SK-N-SH (cell line): ENCODE measurements at regions of chr3 and their contacts with region 1.

Region 1: DNA sequence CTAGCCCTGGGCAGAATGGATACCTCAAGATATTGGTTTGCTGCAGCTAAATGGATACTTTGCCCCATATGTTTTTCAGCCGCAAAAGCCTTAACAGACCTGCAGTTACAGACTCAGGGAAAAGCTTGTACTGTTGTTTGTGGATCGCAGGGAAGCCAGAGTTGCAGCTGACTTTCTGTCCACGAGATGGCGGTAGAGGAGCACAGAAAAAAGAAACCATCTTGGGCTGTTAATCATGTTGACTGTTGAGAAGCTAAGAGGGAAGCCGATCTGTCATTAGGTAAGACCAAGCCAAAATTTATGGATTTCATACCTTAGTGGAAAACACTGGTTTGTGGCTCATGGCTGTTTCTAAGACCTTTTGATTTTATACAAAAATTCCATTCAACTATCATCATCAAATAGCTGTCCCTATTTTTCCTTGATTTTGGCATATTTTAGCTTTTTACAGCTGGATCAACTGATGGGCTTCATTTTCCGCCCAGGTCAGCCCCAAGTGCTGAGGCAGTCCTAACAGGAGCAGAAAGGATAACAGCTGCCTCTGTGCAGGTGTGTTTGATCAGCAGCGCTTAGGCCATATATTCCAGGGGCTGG is 205.7 kb upstream of the ZPLD1 start:
- DNase-seq: peak; percentile 41
- H3K4me3 ChIP-seq: no peak overlapping the region
- H3K27ac ChIP-seq: no peak overlapping the region
- H3K4me1 ChIP-seq: peaks cover 5 to 11% of the 10 kb centered on the region in 2 experiments; a peak in 3 of 4 replicates
- H3K27me3 ChIP-seq: no peaks in the 10 kb centered on the region
- CTCF ChIP-seq: peak; percentile 96
- EP300 ChIP-seq: 0 out of 4 replicates have a peak, but pooled peaks of 1 of the 2 experiments have one; percentile 10
- RAD21 ChIP-seq: peak; percentile 98

Region 2: GRCh38 chr3:101803173-101803782 is 425.9 kb before region 1 on chr3:
- CTCF ChIA-PET with region 1: interaction called, 165 read pairs
- POLR2A ChIA-PET with region 1: no interaction called
- DNase-seq: peak; percentile 56
- H3K4me3 ChIP-seq: no peak overlapping the region; a peak in 1 of 4 replicates
- H3K27ac ChIP-seq: no peak overlapping the region
- H3K4me1 ChIP-seq: no peaks in the 10 kb centered on the region
- H3K27me3 ChIP-seq: no peaks in the 10 kb centered on the region
- CTCF ChIP-seq: peak; percentile 95
- EP300 ChIP-seq: no peak
- RAD21 ChIP-seq: peak; percentile 63

Region 3: DNA sequence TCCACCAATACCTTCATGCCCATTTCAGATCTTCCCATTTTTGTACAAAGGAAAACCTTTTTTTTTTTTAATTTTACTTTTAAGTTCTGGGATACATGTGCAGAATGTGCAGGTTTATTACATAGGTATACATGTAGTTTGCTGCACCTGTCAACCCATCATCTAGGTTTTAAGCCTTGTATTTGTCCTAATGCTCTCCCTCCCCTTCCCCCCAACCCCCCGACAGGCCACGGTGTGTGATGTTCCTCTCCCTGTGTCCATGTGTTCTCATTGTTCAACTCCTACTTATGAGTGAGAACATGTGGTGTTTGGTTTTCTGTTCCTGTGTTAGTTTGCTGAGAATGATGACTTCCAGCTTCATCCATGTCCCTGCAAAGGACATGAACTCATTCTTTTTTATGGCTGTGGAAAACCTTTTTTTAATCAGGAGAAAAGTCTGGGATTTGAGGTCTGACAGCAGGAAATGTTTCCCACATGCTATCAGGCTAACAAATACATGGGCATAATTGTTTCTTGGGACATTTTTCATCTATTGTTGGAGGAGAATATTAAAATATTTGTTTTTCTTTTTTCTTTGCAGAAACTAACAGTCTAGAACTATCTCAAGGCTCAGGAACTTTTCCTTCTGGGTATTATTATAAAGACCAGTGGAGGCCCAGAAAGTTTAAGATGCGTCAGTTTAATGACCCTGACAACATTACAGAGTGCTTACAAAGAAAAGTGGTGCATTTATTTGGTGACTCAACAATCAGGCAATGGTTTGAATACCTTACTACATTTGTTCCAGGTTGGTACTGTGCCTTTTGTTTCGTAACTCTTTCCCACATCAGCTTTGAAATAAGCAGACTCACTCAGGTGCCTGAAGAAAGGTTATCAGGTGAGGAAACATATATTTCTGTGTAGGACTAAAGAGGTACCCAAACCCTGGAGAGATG is 412.7 kb before region 1 on chr3:
- CTCF ChIA-PET with region 1: interaction called, 165 read pairs
- POLR2A ChIA-PET with region 1: interaction called, 6 read pairs
- DNase-seq: no peak
- H3K4me3 ChIP-seq: no peak overlapping the region
- H3K27ac ChIP-seq: peak overlapping the region in 1 of 2 experiments; percentile 16; a peak in 2 of 4 replicates
- H3K4me1 ChIP-seq: peaks cover 0 to 3% of the 10 kb centered on the region in 2 experiments; a peak in 3 of 4 replicates
- H3K27me3 ChIP-seq: no peaks in the 10 kb centered on the region
- CTCF ChIP-seq: no peak
- EP300 ChIP-seq: no peak
- RAD21 ChIP-seq: no peak

Region 4: DNA sequence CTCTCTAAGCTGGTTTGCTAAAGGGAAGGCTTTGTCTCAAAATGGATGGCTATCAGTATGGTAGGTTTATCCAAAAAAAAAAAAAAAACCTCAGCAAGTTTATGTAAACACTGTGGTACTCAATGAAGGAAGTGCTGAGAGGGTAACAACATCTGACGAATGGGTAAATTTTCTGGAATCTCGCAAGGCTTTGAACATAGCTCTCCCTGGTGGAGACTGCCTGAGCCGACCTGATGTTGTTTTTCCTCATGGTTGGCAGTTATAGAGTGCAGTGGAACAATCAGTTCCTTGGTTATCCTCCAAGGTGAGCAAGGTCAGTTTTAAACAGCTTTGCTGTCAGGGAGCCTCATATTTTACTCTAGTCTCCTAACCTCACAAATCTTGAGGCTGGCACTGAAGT is 300.3 kb after region 1 on chr3:
- CTCF ChIA-PET with region 1: interaction called, 151 read pairs
- POLR2A ChIA-PET with region 1: interaction called, 3 read pairs
- DNase-seq: peak; percentile 5
- H3K4me3 ChIP-seq: no peak overlapping the region
- H3K27ac ChIP-seq: no peak overlapping the region
- H3K4me1 ChIP-seq: no peaks in the 10 kb centered on the region; a peak in 1 of 4 replicates
- H3K27me3 ChIP-seq: no peaks in the 10 kb centered on the region
- CTCF ChIP-seq: peak; percentile 26
- EP300 ChIP-seq: no peak
- RAD21 ChIP-seq: peak; percentile 63

Region 5: DNA sequence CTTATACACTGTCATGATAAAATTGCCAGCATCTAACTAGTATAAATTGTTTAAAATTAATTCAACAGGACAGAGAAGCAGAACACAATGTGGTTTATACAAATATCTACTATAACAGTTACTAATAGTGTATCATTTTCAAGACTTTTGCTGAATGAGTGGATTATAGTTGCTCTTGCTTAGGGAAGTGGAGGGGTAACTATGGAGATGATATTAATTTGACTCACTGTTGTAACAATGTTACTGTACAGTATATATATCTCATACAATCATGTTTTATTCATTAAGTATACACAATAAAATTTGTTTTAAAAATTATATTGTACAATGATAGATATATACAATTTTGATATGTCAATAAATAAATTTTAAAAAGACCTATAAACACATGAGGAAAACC is 324.7 kb after region 1 on chr3:
- CTCF ChIA-PET with region 1: interaction called, 10 read pairs
- POLR2A ChIA-PET with region 1: no interaction called
- DNase-seq: no peak
- H3K4me3 ChIP-seq: no peak overlapping the region
- H3K27ac ChIP-seq: no peak overlapping the region
- H3K4me1 ChIP-seq: no peaks in the 10 kb centered on the region
- H3K27me3 ChIP-seq: no peaks in the 10 kb centered on the region
- CTCF ChIP-seq: no peak
- EP300 ChIP-seq: no peak
- RAD21 ChIP-seq: no peak